CD8-positive, alpha-beta memory T cell (primary cell): ENCODE measurements at regions of chr9 and their contacts with region 1.

Region 1: DNA sequence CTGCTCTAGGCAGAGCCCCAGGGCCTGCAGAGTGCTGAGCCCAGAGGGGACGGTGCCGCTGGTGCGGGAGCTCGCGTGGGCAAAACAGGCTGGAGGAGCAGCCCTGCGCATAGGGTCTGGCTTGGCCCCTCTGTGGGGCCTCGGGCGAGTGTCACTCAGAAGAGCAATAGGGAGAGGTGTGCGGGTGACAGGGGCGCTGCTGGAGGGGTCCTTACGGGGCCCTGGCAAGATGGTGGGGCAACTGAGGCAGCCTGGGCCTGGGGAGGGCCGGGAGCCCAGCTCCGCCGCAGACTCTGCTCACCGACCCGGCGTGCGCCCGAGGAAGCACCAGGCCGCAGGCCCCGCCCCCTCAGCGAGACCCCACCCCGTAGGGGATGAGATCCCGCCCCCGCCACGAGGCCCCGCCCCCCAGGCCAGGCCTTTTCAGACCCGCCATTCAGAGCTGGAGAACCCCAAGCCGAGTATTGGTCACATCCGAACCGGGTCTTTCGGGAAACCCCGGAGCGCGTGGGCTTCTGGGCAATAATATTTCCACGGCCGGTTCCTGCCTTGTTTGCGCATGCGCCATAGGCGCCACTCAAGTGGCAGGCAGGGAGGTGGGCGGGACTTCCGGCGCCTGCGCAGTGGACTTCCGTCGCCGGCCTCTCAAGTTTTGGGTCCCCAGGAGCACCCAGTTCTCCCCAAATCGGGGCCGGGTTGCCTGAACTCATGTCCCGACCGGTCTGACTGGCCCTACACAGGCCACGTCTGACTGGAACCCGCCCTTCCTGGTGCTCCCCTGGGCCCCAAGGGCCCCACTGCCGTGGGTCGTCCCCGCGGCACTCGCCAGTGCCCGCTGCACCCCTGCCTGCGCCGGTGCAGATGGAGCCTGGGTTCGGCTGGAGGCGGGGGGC is 1.3 kb upstream of the RNF208 start:
- DNase-seq: peak; percentile 95 to 99 (median 98)
- H3K4me3 ChIP-seq: peak overlapping the region; percentile 88
- H3K4me3 Mint-ChIP-seq: peak overlapping the region; percentile 71 to 85 (median 76)
- H3K27ac ChIP-seq: peak overlapping the region; percentile 74
- H3K27ac Mint-ChIP-seq: peak overlapping the region; percentile 51 to 91 (median 81)
- H3K4me1 ChIP-seq: peaks cover 13% of the 10 kb centered on the region
- H3K4me1 Mint-ChIP-seq: peaks cover 4 to 15% (median 5%) of the 10 kb centered on the region in 3 donors
- H3K27me3 ChIP-seq: no peaks in the 10 kb centered on the region
- H3K27me3 Mint-ChIP-seq: peaks cover 2 to 4% of the 10 kb centered on the region in 2 donors

Region 2: DNA sequence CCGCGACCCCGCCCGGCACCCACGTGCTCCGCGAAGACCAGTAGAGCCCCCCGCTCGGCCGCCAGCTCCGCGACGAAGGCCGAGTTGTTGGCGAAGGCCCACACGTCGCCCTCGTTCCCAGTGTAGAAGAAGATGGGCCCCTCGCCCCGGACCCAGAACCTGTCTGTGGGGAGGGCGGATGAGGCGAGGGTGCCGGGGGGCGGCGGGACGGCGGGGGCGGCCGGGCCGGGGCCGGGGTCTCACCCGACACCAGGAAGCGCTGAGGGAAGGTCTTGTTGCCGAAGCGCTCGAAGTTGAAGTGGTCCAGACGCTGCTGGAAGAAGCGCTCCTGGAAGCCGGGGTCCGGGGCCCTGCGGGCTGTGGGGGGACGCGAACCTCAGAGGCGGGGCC is 109.1 kb before region 1 on chr9:
- CTCF ChIA-PET with region 1: interaction called, 16 read pairs
- POLR2A ChIA-PET with region 1: no interaction called
- DNase-seq: no peak
- H3K4me3 ChIP-seq: peak overlapping the region; percentile 50
- H3K4me3 Mint-ChIP-seq: peak overlapping the region; percentile 24 to 64 (median 51)
- H3K27ac ChIP-seq: peak overlapping the region; percentile 38
- H3K27ac Mint-ChIP-seq: peak overlapping the region in 1 of 8 donors; percentile 29
- H3K4me1 ChIP-seq: peaks cover 10% of the 10 kb centered on the region
- H3K4me1 Mint-ChIP-seq: peaks cover 0 to 12% (median 3%) of the 10 kb centered on the region in 3 donors
- H3K27me3 ChIP-seq: no peaks in the 10 kb centered on the region
- H3K27me3 Mint-ChIP-seq: peaks cover 0 to 1% of the 10 kb centered on the region in 2 donors

Region 3: GRCh38 chr9:137123468-137123837 is 99.9 kb before region 1 on chr9:
- CTCF ChIA-PET with region 1: interaction called, 30 read pairs
- POLR2A ChIA-PET with region 1: interaction called, 13 read pairs
- DNase-seq: no peak
- H3K4me3 ChIP-seq: no peak overlapping the region
- H3K4me3 Mint-ChIP-seq: no peak overlapping the region
- H3K27ac ChIP-seq: no peak overlapping the region
- H3K27ac Mint-ChIP-seq: no peak overlapping the region
- H3K4me1 ChIP-seq: peaks cover 19% of the 10 kb centered on the region
- H3K4me1 Mint-ChIP-seq: peaks cover 19 to 27% (median 25%) of the 10 kb centered on the region in 3 donors
- H3K27me3 ChIP-seq: no peaks in the 10 kb centered on the region
- H3K27me3 Mint-ChIP-seq: no peaks in the 10 kb centered on the region

Region 4: GRCh38 chr9:137129456-137130175 is 93.7 kb before region 1 on chr9:
- CTCF ChIA-PET with region 1: interaction called, 30 read pairs
- POLR2A ChIA-PET with region 1: interaction called, 13 read pairs
- DNase-seq: peak; percentile 78 to 92 (median 89)
- H3K4me3 ChIP-seq: peak overlapping the region; percentile 78
- H3K4me3 Mint-ChIP-seq: peak overlapping the region; percentile 79 to 99 (median 88)
- H3K27ac ChIP-seq: peak overlapping the region; percentile 81
- H3K27ac Mint-ChIP-seq: peak overlapping the region; percentile 68 to 98 (median 88)
- H3K4me1 ChIP-seq: peaks cover 25% of the 10 kb centered on the region
- H3K4me1 Mint-ChIP-seq: peaks cover 27 to 36% (median 30%) of the 10 kb centered on the region in 3 donors
- H3K27me3 ChIP-seq: no peaks in the 10 kb centered on the region
- H3K27me3 Mint-ChIP-seq: peaks cover 11 to 20% of the 10 kb centered on the region in 2 donors

Region 5: DNA sequence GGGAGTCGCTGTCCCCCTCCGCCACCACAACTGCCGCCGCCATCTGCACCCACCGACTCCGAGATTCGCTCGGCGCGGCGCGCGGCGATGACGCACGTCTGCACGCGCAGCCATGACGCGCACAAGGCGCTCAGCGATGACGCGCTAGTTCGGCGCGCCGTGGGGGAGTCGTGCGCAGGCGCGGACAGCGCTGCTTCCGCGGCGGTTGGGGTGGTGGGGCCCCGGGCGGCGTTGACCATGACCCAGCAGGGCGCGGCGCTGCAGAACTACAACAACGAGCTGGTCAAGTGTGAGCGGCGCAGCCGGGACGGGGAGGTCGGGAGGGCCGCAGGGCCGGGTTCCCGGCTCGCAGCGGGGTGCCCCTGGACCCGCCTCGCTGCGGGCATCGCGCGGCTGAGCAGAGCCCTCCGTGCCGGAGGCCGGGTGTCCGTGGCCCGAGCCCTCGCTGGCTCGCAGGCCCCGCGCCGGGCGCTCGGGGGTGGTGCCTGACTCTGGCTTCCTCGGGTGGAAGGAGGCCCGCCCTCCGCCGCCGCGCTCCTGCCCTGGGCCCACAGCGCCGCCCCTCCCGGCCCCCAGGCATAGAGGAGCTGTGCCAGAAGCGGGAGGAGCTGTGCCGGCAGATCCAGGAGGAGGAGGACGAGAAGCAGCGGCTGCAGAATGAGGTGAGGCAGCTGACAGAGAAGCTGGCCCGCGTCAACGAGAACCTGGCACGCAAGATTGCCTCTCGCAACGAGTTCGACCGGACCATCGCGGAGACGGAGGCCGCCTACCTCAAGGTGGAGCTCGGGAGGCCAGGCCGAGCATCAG is 34.6 kb before region 1 on chr9 and contains the starts of genes ANAPC2 and SSNA1:
- CTCF ChIA-PET with region 1: interaction called, 23 read pairs
- POLR2A ChIA-PET with region 1: interaction called, 5 read pairs
- DNase-seq: peak; percentile 89 to 94 (median 90)
- H3K4me3 ChIP-seq: peak within 1 kb of the TSS; percentile 91
- H3K4me3 Mint-ChIP-seq: peak within 1 kb of the TSS; percentile 90 to 98 (median 92)
- H3K27ac ChIP-seq: peak within 1 kb of the TSS; percentile 94
- H3K27ac Mint-ChIP-seq: peak within 1 kb of the TSS; percentile 85 to 99 (median 96)
- H3K4me1 ChIP-seq: peaks cover 33% of the 10 kb centered on the region
- H3K4me1 Mint-ChIP-seq: peaks cover 28 to 56% (median 28%) of the 10 kb centered on the region in 3 donors
- H3K27me3 ChIP-seq: no peaks in the 10 kb centered on the region
- H3K27me3 Mint-ChIP-seq: no peaks in the 10 kb centered on the region
- total RNA-seq, gene ANAPC2: 50.2 to 57.0 TPM
- total RNA-seq, gene SSNA1: 114 to 118 TPM

Region 6: DNA sequence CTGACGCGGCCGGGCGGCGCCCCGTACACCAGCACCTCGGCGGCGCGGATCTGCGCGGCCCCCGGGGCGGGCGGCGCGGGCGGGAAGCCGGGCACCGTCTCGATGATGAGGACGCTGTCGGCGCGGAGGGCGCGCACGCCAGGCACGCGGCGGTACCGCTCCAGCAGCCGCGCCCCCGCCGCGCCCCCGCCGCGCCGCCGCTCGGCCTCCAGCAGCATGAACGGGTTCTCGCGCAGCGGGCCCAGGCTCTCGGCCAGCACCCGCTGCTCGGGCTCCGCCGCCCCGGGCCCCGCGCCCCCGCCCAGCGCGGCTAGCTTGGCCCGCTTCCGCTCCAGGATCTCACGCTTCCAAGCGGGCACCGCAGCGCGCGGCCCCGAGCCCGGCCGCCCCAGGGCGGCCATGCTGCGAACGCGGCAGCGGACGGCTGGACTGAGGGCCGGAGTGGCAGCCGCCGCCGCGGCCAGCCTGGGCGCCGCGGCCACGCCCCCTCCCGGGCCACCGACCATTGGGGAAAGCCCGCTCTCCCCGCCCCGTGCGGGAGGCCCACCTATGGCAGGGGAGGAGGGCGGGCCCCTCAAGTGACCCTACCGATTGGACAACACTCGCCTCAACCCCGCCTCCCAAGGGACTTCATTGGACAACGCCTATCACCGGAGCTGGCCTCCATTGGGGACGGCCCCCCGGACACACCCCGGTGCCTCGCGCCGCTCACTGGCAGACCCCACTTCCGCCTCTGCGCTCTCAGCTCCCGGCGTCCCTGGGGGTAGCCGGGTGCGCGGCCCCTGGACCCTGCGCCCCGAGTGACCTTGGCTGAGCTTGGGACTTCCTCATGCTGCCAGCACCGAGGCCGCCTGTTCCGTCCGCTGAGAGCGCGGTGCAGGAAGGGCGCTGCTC is 22.8 kb before region 1 on chr9 and contains the start of gene TPRN:
- CTCF ChIA-PET with region 1: interaction called, 4 read pairs
- POLR2A ChIA-PET with region 1: interaction called, 15 read pairs
- DNase-seq: peak; percentile 95 to 99 (median 98)
- H3K4me3 ChIP-seq: peak within 1 kb of the TSS; percentile 78
- H3K4me3 Mint-ChIP-seq: peak within 1 kb of the TSS; percentile 79 to 98 (median 83)
- H3K27ac ChIP-seq: peak within 1 kb of the TSS; percentile 74
- H3K27ac Mint-ChIP-seq: peak within 1 kb of the TSS; percentile 66 to 97 (median 78)
- H3K4me1 ChIP-seq: peaks cover 30% of the 10 kb centered on the region
- H3K4me1 Mint-ChIP-seq: peaks cover 20 to 35% (median 21%) of the 10 kb centered on the region in 3 donors
- H3K27me3 ChIP-seq: no peaks in the 10 kb centered on the region
- H3K27me3 Mint-ChIP-seq: no peaks in the 10 kb centered on the region
- total RNA-seq, gene TPRN: 14.1 to 15.1 TPM

Region 7: DNA sequence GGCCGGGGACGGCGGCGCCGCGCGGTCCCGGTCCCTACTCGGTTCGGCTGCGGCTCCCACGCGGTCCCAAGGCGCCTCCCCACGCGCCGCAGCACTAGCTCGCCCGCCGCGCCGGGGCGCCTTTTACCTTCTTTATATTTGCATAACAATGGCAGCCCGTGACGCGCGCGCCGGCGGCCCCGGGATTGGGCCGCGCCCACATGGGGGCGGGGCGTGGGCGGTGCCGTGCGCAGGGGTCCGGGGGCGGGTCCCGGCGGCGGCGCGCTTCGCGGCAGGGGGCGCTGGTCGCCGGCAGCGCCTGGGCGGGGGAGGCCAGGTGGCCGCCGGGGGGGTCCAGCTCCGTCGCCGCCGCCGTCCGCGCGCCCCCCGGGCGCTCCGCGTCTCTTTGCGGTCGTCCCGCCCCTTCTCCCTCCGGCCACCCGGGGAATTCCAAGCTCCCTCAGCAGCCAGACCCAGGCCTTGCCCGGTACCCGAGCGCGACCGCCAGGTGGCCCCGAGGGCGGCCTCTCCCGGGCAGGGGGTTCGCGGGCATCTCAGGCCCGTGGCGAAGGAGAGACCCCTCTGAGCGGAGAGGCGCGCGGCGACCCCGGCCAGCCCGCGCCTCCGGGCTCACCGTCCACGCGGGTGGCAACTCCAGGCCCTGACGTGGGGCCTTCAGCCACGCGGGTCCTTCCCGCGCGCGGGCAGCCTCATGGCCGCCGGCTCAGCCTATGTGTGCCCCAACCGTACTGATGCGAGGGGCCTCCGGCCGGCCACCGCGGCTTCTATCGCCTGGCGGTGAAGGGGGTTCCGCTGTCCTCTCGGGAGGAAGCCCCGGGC is 79.1 kb after region 1 on chr9 and contains the start of gene NRARP:
- CTCF ChIA-PET with region 1: no interaction called
- POLR2A ChIA-PET with region 1: no interaction called
- DNase-seq: peak; percentile 77 to 92 (median 81)
- H3K4me3 ChIP-seq: no peak within 1 kb of the TSS
- H3K4me3 Mint-ChIP-seq: peak within 1 kb of the TSS; percentile 35 to 87 (median 60)
- H3K27ac ChIP-seq: peak within 1 kb of the TSS; percentile 64
- H3K27ac Mint-ChIP-seq: no peak within 1 kb of the TSS
- H3K4me1 ChIP-seq: peaks cover 26% of the 10 kb centered on the region
- H3K4me1 Mint-ChIP-seq: peaks cover 5 to 18% (median 5%) of the 10 kb centered on the region in 3 donors
- H3K27me3 ChIP-seq: peaks cover 27% of the 10 kb centered on the region
- H3K27me3 Mint-ChIP-seq: peaks cover 5 to 14% of the 10 kb centered on the region in 2 donors
- total RNA-seq, gene NRARP: 1.9 to 2.3 TPM

Region 8: DNA sequence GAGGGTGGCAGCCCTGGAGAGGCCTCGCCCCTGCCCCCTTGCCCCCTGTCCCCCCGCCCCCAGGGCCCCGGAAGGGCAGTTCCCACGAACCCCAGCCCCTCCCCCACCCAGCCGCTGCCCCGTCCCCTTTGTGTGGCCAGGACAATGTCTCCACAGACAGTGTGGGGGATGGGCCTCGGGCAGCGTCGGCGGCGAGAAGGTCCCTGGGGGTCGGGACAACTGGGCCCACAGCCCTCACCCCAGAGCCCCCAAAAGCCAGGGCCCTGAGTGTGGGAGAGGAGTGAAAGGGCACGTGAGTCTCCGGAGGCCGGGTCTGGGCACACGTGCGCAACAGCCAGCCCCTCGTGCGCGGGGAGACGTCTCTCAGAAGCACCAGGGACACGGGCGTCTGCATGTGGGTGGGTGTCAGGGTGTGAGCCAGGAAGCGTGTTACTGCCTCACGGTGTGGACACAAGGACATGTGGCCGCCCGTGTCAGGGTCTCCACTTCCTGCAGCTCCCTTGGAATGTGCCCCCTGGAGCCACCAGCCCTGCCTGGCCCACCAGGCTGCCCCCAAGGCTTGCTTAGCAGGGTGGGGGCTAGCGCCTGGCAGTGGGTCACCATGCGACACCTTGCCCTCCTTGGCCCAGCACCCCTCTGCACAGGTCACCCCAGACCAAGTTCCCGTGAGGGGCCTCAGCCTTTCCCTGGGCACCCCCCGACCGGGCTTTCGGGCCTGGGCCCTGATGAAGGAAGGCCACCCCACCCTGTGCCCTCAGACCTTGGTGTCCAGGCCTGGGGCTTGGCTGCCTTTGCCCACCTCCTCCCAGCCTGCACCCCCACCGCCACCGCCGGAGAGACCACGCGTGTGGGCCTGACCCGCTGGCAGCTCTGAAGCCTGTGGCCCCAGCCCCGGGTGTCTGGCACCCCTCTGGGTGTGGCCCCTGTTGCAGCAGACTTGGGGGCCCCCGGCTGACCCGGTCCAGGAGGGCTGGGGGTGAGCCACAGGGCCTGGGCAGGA is 91.5 kb after region 1 on chr9:
- CTCF ChIA-PET with region 1: no interaction called
- POLR2A ChIA-PET with region 1: no interaction called
- DNase-seq: peak in 1 of 5 donors; percentile 44
- H3K4me3 ChIP-seq: no peak overlapping the region
- H3K4me3 Mint-ChIP-seq: no peak overlapping the region
- H3K27ac ChIP-seq: no peak overlapping the region
- H3K27ac Mint-ChIP-seq: no peak overlapping the region
- H3K4me1 ChIP-seq: no peaks in the 10 kb centered on the region
- H3K4me1 Mint-ChIP-seq: no peaks in the 10 kb centered on the region
- H3K27me3 ChIP-seq: no peaks in the 10 kb centered on the region
- H3K27me3 Mint-ChIP-seq: peaks cover 0 to 2% of the 10 kb centered on the region in 2 donors